Activated naive CD4-positive, alpha-beta T cell treated with anti-CD3 and anti-CD28 coated beads for 36 hours (primary cell): ENCODE measurements at regions of chr1 and their contacts with region 1.

Region 1: DNA sequence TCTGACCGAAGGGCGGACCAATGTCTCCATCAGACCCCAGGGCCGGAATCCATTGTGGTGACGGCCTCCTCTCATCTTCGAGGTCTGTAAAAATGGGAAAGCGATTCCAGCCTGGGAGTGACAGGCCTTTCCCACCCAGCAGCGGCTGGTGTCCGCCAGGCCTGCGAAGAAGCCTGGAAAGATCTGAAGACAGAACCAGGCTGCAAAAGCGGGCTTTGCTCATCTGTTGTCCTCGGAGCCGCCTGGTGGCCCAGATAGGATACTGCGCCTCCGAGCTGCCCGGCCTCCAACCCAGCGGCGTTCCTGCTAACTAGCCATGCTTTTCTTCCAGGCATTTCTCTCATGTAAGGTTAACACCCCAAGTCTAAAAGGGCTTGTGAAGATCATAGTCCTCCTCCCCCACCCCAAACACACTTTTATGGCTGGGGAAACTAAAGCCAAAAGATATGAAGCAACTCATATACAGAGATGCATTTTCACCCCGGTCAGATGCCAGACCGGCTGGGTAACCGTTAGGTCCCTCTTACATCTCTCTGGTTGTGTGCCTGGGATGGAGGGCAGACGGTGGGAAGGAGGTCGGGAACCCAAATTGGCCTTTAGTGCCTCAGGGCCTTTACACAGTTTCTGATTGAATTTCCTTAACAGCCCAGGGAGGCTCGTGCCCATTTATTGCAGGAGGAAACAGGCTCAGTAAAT is 1.9 kb upstream of the DHRS3 start:
- DNase-seq: peak; percentile 87
- H3K4me3 Mint-ChIP-seq: peak overlapping the region; percentile 97
- H3K27ac Mint-ChIP-seq: peak overlapping the region; percentile 68
- H3K4me1 Mint-ChIP-seq: peaks cover 35% of the 10 kb centered on the region
- H3K27me3 Mint-ChIP-seq: no peaks in the 10 kb centered on the region

Region 2: GRCh38 chr1:12059722-12060464 is 560.0 kb before region 1 on chr1:
- CTCF ChIA-PET with region 1: no interaction called
- intact Hi-C with region 1: loop called (anchors 5 kb)
- DNase-seq: peak; percentile 81
- H3K4me3 Mint-ChIP-seq: peak overlapping the region; percentile 2
- H3K27ac Mint-ChIP-seq: peak overlapping the region; percentile 38
- H3K4me1 Mint-ChIP-seq: peaks cover 60% of the 10 kb centered on the region
- H3K27me3 Mint-ChIP-seq: peaks cover 22% of the 10 kb centered on the region

Region 3: DNA sequence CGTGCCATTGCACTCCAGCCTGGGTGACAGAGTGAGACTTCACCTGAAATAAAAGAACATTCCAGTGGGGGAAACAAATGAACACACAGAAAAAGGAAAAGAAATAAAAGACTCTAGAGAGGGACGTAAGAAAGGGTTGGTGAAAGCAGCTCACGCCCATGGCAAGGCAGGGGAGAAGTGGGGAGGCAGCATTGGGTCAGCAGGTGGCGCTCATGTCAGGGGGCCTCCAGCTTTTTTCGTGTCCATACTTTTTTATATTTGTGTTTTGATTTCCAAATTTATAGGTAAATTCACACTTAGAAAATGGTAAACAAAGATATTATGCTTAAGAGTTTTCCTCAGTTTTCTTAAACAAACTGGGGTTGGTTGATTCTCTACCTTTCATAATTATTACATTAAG is 344.6 kb before region 1 on chr1:
- CTCF ChIA-PET with region 1: interaction called, 10 read pairs
- intact Hi-C with region 1: loop called (anchors 1 kb)
- DNase-seq: peak; percentile 70
- H3K4me3 Mint-ChIP-seq: no peak overlapping the region
- H3K27ac Mint-ChIP-seq: no peak overlapping the region
- H3K4me1 Mint-ChIP-seq: no peaks in the 10 kb centered on the region
- H3K27me3 Mint-ChIP-seq: no peaks in the 10 kb centered on the region

Region 4: GRCh38 chr1:12386130-12386529 is 233.8 kb before region 1 on chr1:
- CTCF ChIA-PET with region 1: no interaction called
- intact Hi-C with region 1: loop called (anchors 2 kb)
- DNase-seq: peak; percentile 68
- H3K4me3 Mint-ChIP-seq: no peak overlapping the region
- H3K27ac Mint-ChIP-seq: peak overlapping the region; percentile 80
- H3K4me1 Mint-ChIP-seq: peaks cover 43% of the 10 kb centered on the region
- H3K27me3 Mint-ChIP-seq: no peaks in the 10 kb centered on the region

Region 5: GRCh38 chr1:12472798-12473551 is 147.0 kb before region 1 on chr1:
- CTCF ChIA-PET with region 1: interaction called, 4 read pairs
- intact Hi-C with region 1: loop called (anchors 1 kb)
- DNase-seq: peak; percentile 95
- H3K4me3 Mint-ChIP-seq: peak overlapping the region; percentile 56
- H3K27ac Mint-ChIP-seq: peak overlapping the region; percentile 98
- H3K4me1 Mint-ChIP-seq: peaks cover 89% of the 10 kb centered on the region
- H3K27me3 Mint-ChIP-seq: no peaks in the 10 kb centered on the region

Region 6: DNA sequence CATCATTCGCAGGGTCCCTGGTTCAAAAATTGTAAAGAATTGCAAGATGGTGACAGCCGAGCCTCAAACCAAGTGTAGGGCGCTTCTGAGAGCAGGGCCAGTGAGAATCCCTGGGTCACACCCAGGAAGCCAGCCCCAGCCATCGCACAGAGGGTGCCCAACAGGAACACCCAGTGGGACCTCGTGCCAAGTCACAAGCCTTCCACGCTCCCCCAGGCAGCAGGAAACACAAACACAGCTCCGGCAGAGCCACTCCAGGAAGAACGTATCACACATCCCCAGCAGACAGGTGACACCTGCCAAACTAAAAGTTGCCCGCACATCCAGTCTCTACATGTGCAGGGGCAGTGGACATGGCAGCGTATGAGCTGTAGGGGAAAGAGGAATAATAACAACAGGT is 22.1 kb before region 1 on chr1:
- CTCF ChIA-PET with region 1: interaction called, 10 read pairs
- intact Hi-C with region 1: loop called (anchors 1 kb)
- DNase-seq: no peak
- H3K4me3 Mint-ChIP-seq: no peak overlapping the region
- H3K27ac Mint-ChIP-seq: no peak overlapping the region
- H3K4me1 Mint-ChIP-seq: peaks cover 51% of the 10 kb centered on the region
- H3K27me3 Mint-ChIP-seq: no peaks in the 10 kb centered on the region

Region 7: DNA sequence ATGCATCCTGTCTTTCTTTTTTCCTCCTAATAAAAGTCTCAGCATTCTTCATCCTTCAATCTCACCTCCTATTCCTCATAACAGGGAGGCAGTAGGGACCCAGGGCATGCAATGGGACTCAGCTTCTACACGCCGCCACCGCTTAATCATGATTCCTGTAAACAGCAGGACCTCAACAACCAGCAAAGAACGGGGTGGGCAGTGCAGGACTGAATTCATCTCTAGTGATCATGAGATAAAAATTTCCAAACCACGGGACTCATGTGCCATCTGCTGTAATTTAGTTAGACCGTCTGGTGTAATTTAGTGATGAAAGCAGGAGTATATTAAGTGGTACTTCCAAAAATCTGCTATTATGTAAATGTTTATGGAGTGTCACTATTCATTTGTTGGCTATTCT is 159.0 kb after region 1 on chr1:
- CTCF ChIA-PET with region 1: no interaction called
- intact Hi-C with region 1: no loop called
- DNase-seq: no peak
- H3K4me3 Mint-ChIP-seq: no peak overlapping the region
- H3K27ac Mint-ChIP-seq: no peak overlapping the region
- H3K4me1 Mint-ChIP-seq: no peaks in the 10 kb centered on the region
- H3K27me3 Mint-ChIP-seq: peaks cover 6% of the 10 kb centered on the region